Dorsolateral prefrontal cortex (tissue), 120 donors: ENCODE measurements at regions of chr5 and their contacts with region 1.

Region 1: GRCh38 chr5:60382716-60383115 is 317.2 kb downstream of the DEPDC1B start:
- DNase-seq: no peak
- H3K4me3 ChIP-seq: no peak overlapping the region
- H3K27ac ChIP-seq: no peak overlapping the region
- H3K27me3 ChIP-seq: no peaks in the 10 kb centered on the region
- CTCF ChIP-seq: peak in 55 of 56 donors; percentile 21 to 74 (median 52)

Region 2: GRCh38 chr5:60295423-60295822 is 87.3 kb before region 1 on chr5:
- intact Hi-C with region 1: loop called in 1 of 2 experiments (anchors 5 kb)
- DNase-seq: peak in 3 of 10 donors; percentile 30 to 41 (median 38)
- H3K4me3 ChIP-seq: no peak overlapping the region
- H3K27ac ChIP-seq: no peak overlapping the region
- H3K27me3 ChIP-seq: no peaks in the 10 kb centered on the region
- CTCF ChIP-seq: peak in 54 of 56 donors; percentile 15 to 77 (median 53)

Region 3: GRCh38 chr5:60494635-60495034 is 111.9 kb after region 1 on chr5:
- intact Hi-C with region 1: loop called in 1 of 2 experiments (anchors 5 kb)
- DNase-seq: no peak
- H3K4me3 ChIP-seq: no peak overlapping the region
- H3K27ac ChIP-seq: peak overlapping the region in 56 of 59 donors; percentile 3 to 96 (median 82)
- H3K27me3 ChIP-seq: no peaks in the 10 kb centered on the region
- CTCF ChIP-seq: no peak

Region 4: GRCh38 chr5:60586307-60586901 is 203.7 kb after region 1 on chr5:
- intact Hi-C with region 1: loop called in 1 of 2 experiments (anchors 10 kb)
- DNase-seq: no peak
- H3K4me3 ChIP-seq: no peak overlapping the region
- H3K27ac ChIP-seq: no peak overlapping the region
- H3K27me3 ChIP-seq: no peaks in the 10 kb centered on the region
- CTCF ChIP-seq: peak in 55 of 56 donors; percentile 27 to 84 (median 64)